Mammary epithelial cell (primary cell): ENCODE measurements at regions of chr15 and their contacts with region 1.

Region 1: GRCh38 chr15:29631076-29632070 is 190.9 kb downstream of the TJP1 start:
- DNase-seq: no peak
- H3K4me3 ChIP-seq: no peak overlapping the region
- H3K27ac ChIP-seq: no peak overlapping the region
- H3K4me1 ChIP-seq: no peaks in the 10 kb centered on the region
- H3K27me3 ChIP-seq: no peaks in the 10 kb centered on the region
- CTCF ChIP-seq: no peak

Region 2: GRCh38 chr15:29589406-29589805 is 42.0 kb before region 1 on chr15:
- CTCF ChIA-PET with region 1: no interaction called
- dilution Hi-C with region 1: no loop called
- in situ Hi-C with region 1: loop called in 1 of 2 experiments (anchors 10 kb)
- intact Hi-C with region 1: no loop called
- DNase-seq: no peak
- H3K4me3 ChIP-seq: no peak overlapping the region
- H3K27ac ChIP-seq: no peak overlapping the region
- H3K4me1 ChIP-seq: no peaks in the 10 kb centered on the region
- H3K27me3 ChIP-seq: no peaks in the 10 kb centered on the region
- CTCF ChIP-seq: no peak

Region 3: DNA sequence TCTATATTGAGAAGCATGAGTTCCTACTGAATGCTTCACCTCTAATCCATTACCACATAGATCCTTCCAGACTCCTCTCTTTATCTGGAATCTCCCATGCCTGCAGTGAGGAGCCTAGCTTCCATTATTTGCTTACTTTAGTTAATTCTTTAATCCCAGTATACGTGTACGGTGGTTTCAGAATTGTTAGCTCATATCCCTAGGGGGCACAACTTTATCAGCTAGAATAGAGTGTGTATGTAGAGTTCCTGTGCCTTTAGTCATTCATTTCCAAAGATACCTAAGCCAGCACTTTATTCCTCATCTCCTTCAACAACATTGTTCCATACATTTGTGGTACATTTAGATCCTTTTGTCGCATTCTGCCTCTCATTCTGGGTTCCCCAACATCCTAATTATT is 35.1 kb before region 1 on chr15:
- CTCF ChIA-PET with region 1: no interaction called
- dilution Hi-C with region 1: loop called (anchors 5 kb)
- in situ Hi-C with region 1: no loop called
- intact Hi-C with region 1: no loop called
- DNase-seq: peak; percentile 16
- H3K4me3 ChIP-seq: no peak overlapping the region
- H3K27ac ChIP-seq: no peak overlapping the region
- H3K4me1 ChIP-seq: no peaks in the 10 kb centered on the region
- H3K27me3 ChIP-seq: no peaks in the 10 kb centered on the region
- CTCF ChIP-seq: peak in 1 of 2 donors; percentile 21

Region 4: GRCh38 chr15:29711531-29711930 is 80.2 kb after region 1 on chr15:
- CTCF ChIA-PET with region 1: no interaction called
- dilution Hi-C with region 1: no loop called
- in situ Hi-C with region 1: no loop called
- intact Hi-C with region 1: no loop called
- DNase-seq: no peak
- H3K4me3 ChIP-seq: no peak overlapping the region
- H3K27ac ChIP-seq: no peak overlapping the region
- H3K4me1 ChIP-seq: no peaks in the 10 kb centered on the region
- H3K27me3 ChIP-seq: no peaks in the 10 kb centered on the region
- CTCF ChIP-seq: no peak